ENCODE measurements at regions of chr1 and their contacts with region 1.

Region 1: GRCh38 chr1:17661546-17662157 is 93.5 kb upstream of the ACTL8 start:
- DNase-seq: peak; percentile 75
- ATAC-seq: peak; percentile 66
- H3K4me3 Mint-ChIP-seq: no peak overlapping the region
- H3K27ac Mint-ChIP-seq: no peak overlapping the region
- H3K4me1 Mint-ChIP-seq: no peaks in the 10 kb centered on the region
- H3K27me3 Mint-ChIP-seq: no peaks in the 10 kb centered on the region
- CTCF ChIP-seq: peak; percentile 91

Region 2: GRCh38 chr1:17648457-17649145 is 13.1 kb before region 1 on chr1:
- CTCF ChIA-PET with region 1: interaction called, 12 read pairs
- POLR2A ChIA-PET with region 1: no interaction called
- intact Hi-C with region 1: no loop called
- DNase-seq: no peak
- ATAC-seq: no peak
- H3K4me3 Mint-ChIP-seq: no peak overlapping the region
- H3K27ac Mint-ChIP-seq: no peak overlapping the region
- H3K4me1 Mint-ChIP-seq: no peaks in the 10 kb centered on the region
- H3K27me3 Mint-ChIP-seq: no peaks in the 10 kb centered on the region
- CTCF ChIP-seq: no peak

Region 3: GRCh38 chr1:17826165-17826488 is 164.5 kb after region 1 on chr1:
- CTCF ChIA-PET with region 1: interaction called, 20 read pairs
- POLR2A ChIA-PET with region 1: no interaction called
- intact Hi-C with region 1: loop called (anchors 10 kb)
- DNase-seq: peak; percentile 38
- ATAC-seq: no peak
- H3K4me3 Mint-ChIP-seq: no peak overlapping the region
- H3K27ac Mint-ChIP-seq: no peak overlapping the region
- H3K4me1 Mint-ChIP-seq: no peaks in the 10 kb centered on the region
- H3K27me3 Mint-ChIP-seq: peaks cover 10% of the 10 kb centered on the region
- CTCF ChIP-seq: peak; percentile 62

Region 4: GRCh38 chr1:17915511-17916197 is 254.0 kb after region 1 on chr1:
- CTCF ChIA-PET with region 1: no interaction called
- POLR2A ChIA-PET with region 1: no interaction called
- intact Hi-C with region 1: no loop called
- DNase-seq: no peak
- ATAC-seq: no peak
- H3K4me3 Mint-ChIP-seq: no peak overlapping the region
- H3K27ac Mint-ChIP-seq: no peak overlapping the region
- H3K4me1 Mint-ChIP-seq: no peaks in the 10 kb centered on the region
- H3K27me3 Mint-ChIP-seq: peaks cover 21% of the 10 kb centered on the region
- CTCF ChIP-seq: no peak

Region 5: DNA sequence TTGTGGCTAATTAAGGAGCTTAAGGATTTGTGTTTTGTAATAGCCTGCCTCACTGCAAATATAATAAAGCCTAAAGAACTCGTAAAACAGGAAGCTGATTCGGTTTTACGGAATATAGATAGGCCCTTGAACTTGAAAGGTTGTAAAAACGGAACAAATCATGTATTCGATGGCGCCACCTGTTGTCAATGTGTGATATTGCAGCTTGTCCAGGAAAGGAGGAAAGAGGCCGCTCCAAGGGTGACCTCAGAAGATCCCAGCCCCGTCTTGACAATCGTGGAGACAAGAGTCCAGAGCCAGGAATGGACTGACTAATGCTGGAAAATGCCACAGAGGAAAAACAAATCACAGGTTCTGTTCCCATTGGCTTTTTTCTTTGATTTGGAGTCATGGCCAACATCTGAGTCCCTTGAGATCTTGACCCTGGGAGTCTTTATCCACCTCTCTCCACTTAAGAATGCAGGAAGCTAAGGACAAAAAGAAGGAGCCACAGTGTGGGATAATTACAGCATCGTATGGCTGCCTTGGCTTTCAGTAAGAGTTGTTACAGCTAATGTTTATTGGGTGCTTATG is 438.9 kb after region 1 on chr1:
- CTCF ChIA-PET with region 1: interaction called, 17 read pairs
- POLR2A ChIA-PET with region 1: no interaction called
- intact Hi-C with region 1: loop called (anchors 5 kb)
- DNase-seq: peak; percentile 67
- ATAC-seq: no peak
- H3K4me3 Mint-ChIP-seq: no peak overlapping the region
- H3K27ac Mint-ChIP-seq: no peak overlapping the region
- H3K4me1 Mint-ChIP-seq: no peaks in the 10 kb centered on the region
- H3K27me3 Mint-ChIP-seq: peaks cover 23% of the 10 kb centered on the region
- CTCF ChIP-seq: peak; percentile 85